Activated CD4-positive, alpha-beta T cell treated with anti-CD3 and anti-CD28 coated beads, Interleukin-2, amount 10 ng/mL, durations not matched to agents 24 days and 14 days (primary cell): ENCODE measurements at regions of chr14 and their contacts with region 1.

Region 1: DNA sequence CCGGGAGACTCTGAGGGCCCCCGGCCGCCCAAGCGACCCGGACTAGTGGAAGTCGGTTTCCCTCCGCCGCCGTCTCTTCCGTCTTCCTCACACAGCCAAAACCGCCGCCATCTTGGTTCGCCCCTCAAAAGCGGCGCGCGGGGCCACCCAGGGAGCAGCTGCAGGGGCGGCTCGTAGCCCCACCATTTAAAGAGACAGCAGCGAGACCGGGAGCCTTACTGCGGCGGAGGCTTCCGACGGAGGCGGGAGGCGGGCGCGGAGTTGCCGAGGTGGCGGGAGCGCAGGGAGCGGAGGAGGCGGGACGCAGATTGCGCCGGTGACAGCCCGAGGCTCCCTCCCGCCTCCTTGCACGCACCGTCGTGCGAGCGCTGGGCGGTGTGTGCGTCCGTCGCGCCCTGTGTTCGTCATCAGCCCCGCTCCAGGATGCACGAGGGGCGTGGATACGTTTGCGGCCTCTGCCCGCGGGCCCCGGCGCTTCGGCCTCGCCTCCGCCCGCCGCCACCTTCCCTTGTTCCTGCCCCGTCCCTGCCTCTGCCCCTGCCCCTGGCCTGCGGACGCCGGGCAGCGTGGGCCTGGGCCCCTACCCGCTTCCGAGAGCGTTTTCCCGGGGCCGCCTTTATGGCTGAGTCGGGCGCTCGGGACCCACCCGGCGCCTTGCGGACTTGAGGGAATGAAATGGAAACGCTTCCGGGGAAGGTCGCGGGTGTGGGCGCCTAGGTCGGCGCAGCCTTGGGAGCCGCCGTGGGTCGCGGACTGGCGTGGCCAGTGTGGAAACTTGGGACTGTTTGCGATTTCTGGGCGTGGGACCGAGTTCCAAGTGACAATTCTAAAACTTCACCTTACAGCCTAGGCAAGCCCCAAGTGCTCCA is at the start of gene PPP4R3A:
- DNase-seq: peak; percentile 97
- H3K4me3 Mint-ChIP-seq: peak within 1 kb of the TSS; percentile 97
- H3K27ac Mint-ChIP-seq: peak within 1 kb of the TSS; percentile 100
- H3K4me1 Mint-ChIP-seq: peaks cover 18% of the 10 kb centered on the region
- H3K27me3 Mint-ChIP-seq: peaks cover 3% of the 10 kb centered on the region
- total RNA-seq, gene PPP4R3A: 119 and 138 TPM in 2 replicates

Region 2: GRCh38 chr14:91323671-91324605 is 186.5 kb before region 1 on chr14:
- intact Hi-C with region 1: loop called (anchors 2 kb)
- DNase-seq: peak; percentile 97
- H3K4me3 Mint-ChIP-seq: peak overlapping the region; percentile 82
- H3K27ac Mint-ChIP-seq: peak overlapping the region; percentile 97
- H3K4me1 Mint-ChIP-seq: peaks cover 45% of the 10 kb centered on the region
- H3K27me3 Mint-ChIP-seq: no peaks in the 10 kb centered on the region

Region 3: DNA sequence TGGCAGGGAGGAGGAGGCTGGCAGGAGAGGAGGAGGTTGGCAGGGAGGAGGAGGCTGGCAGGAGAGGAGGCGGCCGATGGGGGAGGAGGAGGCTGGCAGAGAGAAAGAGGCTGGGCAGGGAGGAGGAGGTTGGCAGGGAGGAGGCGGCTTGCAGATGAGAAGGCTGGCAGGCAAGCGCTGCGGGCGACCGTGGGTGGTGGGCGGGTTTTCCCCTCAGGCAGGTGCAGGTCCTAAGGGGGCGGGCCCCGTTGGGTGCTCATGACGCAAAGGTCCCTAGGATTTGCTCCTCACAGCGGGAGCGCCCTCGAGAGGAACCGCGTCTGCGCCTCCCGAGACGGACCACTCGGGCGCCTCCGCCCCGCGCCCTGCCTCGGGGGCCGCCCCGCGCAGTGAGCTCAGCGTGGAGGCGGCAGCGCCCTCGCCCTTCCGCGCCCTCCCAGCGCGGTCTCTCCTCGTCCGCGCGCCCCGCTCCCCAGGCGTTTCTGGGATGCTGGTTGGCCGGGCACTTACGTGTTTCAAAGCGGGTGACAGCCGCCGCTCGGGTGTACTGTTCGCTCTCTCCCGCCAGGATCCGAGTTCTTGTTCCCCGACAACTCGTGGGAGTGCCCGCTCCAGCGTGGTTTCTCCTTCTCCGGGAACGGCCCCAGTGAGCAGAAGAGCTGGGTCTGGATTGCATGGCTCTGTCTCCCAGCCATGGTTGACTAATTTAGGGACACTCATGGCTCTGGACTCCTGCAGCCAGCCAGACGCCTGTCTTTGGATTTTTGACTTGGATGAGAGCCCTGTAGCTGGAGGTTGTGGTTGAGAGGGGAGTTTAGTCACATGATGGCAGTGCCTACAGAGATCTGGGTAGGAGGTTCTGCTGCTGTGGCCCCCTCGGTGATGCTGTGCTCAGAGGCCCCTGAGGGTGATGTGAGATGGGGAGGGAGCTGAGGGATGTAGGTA is 63.8 kb after region 1 on chr14:
- intact Hi-C with region 1: loop called (anchors 2 kb)
- DNase-seq: peak; percentile 82
- H3K4me3 Mint-ChIP-seq: peak overlapping the region; percentile 86
- H3K27ac Mint-ChIP-seq: peak overlapping the region; percentile 70
- H3K4me1 Mint-ChIP-seq: peaks cover 15% of the 10 kb centered on the region
- H3K27me3 Mint-ChIP-seq: peaks cover 28% of the 10 kb centered on the region

Region 4: GRCh38 chr14:91854327-91854934 is 344.0 kb after region 1 on chr14:
- intact Hi-C with region 1: no loop called
- DNase-seq: no peak
- H3K4me3 Mint-ChIP-seq: no peak overlapping the region
- H3K27ac Mint-ChIP-seq: peak overlapping the region; percentile 6
- H3K4me1 Mint-ChIP-seq: peaks cover 46% of the 10 kb centered on the region
- H3K27me3 Mint-ChIP-seq: no peaks in the 10 kb centered on the region

Region 5: DNA sequence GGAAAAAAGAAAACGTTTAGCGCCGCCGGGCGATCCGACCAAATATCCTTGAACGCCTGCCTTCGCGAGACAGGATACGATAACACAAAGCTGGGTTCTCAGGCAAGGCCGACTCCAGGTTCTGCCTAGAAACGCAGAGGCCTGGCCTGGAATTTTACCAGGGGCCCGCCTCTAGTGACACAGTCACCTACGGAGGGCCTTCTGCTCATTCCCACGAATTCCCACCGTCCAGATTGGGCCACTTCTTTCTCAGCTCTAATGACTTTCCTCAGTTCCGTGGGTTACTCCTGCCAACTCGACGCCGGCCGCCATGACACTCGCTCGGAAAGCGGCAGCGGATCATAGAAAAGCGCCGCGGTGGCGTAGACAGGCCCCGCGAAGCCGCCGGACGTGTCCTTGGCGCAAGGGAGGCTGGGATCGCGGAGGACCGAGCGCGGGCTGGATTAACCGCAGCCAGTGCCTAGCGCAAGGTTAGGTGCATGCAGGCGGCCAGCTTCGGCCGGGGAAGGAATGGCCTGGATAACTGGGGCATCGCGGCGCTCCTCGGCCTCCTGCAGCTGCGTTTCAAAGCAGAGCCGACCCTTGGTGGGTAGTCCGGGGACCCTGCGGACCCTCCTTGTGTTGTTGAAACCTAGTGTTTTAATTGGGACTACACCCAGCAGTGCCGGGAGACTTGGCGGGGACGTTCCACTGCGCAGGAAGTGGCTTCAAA is 529.5 kb after region 1 on chr14 and contains the start of gene TRIP11:
- intact Hi-C with region 1: loop called (anchors 2 kb)
- DNase-seq: peak; percentile 99
- H3K4me3 Mint-ChIP-seq: peak within 1 kb of the TSS; percentile 93
- H3K27ac Mint-ChIP-seq: peak within 1 kb of the TSS; percentile 98
- H3K4me1 Mint-ChIP-seq: peaks cover 31% of the 10 kb centered on the region
- H3K27me3 Mint-ChIP-seq: no peaks in the 10 kb centered on the region
- total RNA-seq, gene TRIP11: 38.6 and 42.0 TPM in 2 replicates